Heart left ventricle (tissue), 16 donors: ENCODE measurements at regions of chr9 and their contacts with region 1.

Region 1: DNA sequence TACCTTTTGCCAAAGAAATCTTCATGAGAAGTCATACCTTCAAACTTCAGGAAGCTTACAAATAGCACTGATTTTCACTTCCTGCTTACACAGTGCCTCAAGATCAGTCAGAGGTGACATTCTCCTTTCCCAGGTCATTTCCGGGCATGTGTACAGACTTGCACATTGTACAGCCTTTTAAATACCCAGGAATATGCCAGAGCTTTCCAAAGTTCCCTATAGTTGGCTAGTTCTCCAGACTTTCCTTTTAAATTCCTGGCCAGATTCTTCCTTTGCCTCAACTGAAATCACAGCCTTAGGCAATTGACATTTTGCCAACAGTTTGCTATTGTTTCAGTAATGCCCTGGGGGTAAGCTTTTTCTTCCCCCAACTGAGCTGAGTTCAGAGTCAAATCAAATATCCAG is 47.2 kb downstream of the RFX3 start:
- DNase-seq: no peak
- ATAC-seq: peak in 1 of 4 donors; percentile 74
- H3K4me3 ChIP-seq: no peak overlapping the region
- H3K27ac ChIP-seq: peak overlapping the region in 6 of 12 donors; percentile 5 to 28 (median 17)
- H3K4me1 ChIP-seq: peaks cover 0 to 39% (median 0%) of the 10 kb centered on the region in 12 donors
- H3K27me3 ChIP-seq: no peaks in the 10 kb centered on the region
- CTCF ChIP-seq: no peak
- POLR2A ChIP-seq: no peak

Region 2: DNA sequence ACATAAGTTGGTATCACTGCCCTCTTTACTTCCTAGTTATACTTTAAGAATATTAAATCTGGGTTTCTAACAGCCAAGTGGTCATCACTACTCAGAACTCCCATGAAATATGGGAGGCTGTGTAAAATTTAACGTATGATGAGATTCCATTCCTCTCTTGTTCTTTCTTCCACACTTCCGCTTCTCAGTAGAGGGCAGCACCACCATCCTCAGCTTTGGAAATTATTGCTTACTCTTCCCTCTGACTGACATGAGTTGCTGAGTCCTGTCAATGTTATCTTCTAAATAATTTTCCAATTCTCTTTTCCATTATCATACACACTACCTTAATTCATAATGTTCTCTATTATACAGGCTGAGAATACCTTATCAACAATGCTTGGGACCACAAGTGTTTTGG is 146.7 kb before region 1 on chr9:
- intact Hi-C with region 1: no loop called
- DNase-seq: no peak
- ATAC-seq: no peak
- H3K4me3 ChIP-seq: no peak overlapping the region
- H3K27ac ChIP-seq: no peak overlapping the region
- H3K4me1 ChIP-seq: peaks cover 0 to 7% (median 2%) of the 10 kb centered on the region in 12 donors
- H3K27me3 ChIP-seq: no peaks in the 10 kb centered on the region
- CTCF ChIP-seq: peak in 6 of 12 donors; percentile 9 to 40 (median 25)
- POLR2A ChIP-seq: no peak

Region 3: DNA sequence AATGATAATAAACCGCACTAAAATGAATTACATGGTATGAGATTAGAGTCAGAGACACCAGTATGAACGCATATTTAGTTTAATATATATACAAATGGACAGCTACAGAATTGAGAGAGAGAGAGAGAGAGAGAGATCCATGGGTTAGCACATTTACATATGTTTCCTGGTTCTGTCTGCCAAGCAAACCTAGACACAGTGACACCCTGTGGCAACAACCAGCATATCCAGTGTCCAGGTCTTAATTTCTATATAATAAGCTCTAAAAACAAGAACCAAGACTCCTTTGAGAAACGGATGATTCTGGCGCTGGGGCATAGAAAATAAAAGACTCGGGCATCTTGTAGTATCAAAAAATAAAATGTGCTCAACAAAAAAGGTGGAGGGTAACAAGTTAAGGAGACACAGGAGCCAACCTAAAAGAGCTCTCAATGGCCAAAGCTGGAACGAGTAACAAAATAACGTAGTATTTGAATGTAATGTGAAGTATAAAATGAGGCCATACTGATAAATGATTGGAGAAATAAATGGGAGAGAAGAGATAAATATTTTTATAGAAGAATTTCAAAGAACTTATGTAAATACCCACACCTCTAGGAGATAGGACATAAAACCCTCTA is 37.2 kb before region 1 on chr9:
- intact Hi-C with region 1: no loop called
- DNase-seq: peak in 4 of 5 donors; percentile 16 to 40 (median 26)
- ATAC-seq: peak in 3 of 4 donors; percentile 57 to 79 (median 62)
- H3K4me3 ChIP-seq: no peak overlapping the region
- H3K27ac ChIP-seq: no peak overlapping the region
- H3K4me1 ChIP-seq: peaks cover 0 to 8% (median 0%) of the 10 kb centered on the region in 12 donors
- H3K27me3 ChIP-seq: no peaks in the 10 kb centered on the region
- CTCF ChIP-seq: peak; percentile 23 to 61 (median 46)
- POLR2A ChIP-seq: no peak

Region 4: DNA sequence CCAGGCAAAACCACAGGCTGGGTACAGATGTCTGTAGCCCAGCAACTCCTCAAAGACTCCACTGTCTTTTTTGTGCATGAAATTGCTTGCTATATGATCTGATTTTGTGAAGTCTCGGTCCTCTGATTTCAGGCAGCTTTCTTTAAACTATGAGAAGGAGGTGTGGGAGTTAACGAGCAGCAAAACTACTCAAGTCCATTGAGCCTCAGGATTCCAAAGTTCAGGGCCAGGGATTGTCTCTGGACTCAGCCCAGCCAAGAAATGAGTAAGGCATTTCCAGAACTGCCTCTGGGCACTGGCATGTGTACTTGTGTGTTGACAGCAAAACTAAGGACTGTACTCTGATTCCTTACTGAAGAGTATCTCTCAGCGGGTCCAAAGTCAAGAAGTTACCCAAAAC is 874.7 kb after region 1 on chr9:
- intact Hi-C with region 1: loop called in 1 of 10 experiments (anchors 10 kb)
- DNase-seq: no peak
- ATAC-seq: no peak
- H3K4me3 ChIP-seq: no peak overlapping the region
- H3K27ac ChIP-seq: no peak overlapping the region
- H3K4me1 ChIP-seq: no peaks in the 10 kb centered on the region
- H3K27me3 ChIP-seq: no peaks in the 10 kb centered on the region
- CTCF ChIP-seq: no peak
- POLR2A ChIP-seq: no peak